ENCODE measurements at regions of chr14 and their contacts with region 1.

Region 1: GRCh38 chr14:79011091-79011919 is 841.1 kb downstream of the NRXN3 start:
- DNase-seq: no peak
- ATAC-seq: no peak; the same call in 1 of the 2 replicates
- H3K4me3 Mint-ChIP-seq: no peak overlapping the region
- H3K27ac Mint-ChIP-seq: no peak overlapping the region
- H3K4me1 Mint-ChIP-seq: no peaks in the 10 kb centered on the region
- H3K27me3 Mint-ChIP-seq: peaks cover 3% of the 10 kb centered on the region; the same call in 1 of the 2 replicates
- CTCF ChIP-seq: peak; percentile 61

Region 2: GRCh38 chr14:79028281-79028680 is 17.0 kb after region 1 on chr14:
- CTCF ChIA-PET with region 1: no interaction called
- POLR2A ChIA-PET with region 1: no interaction called
- DNase-seq: no peak
- ATAC-seq: no peak
- H3K4me3 Mint-ChIP-seq: no peak overlapping the region
- H3K27ac Mint-ChIP-seq: no peak overlapping the region
- H3K4me1 Mint-ChIP-seq: no peaks in the 10 kb centered on the region
- H3K27me3 Mint-ChIP-seq: peaks cover 3% of the 10 kb centered on the region; the same call in 1 of the 2 replicates
- CTCF ChIP-seq: no peak

Region 3: GRCh38 chr14:79483477-79484388 is 472.4 kb after region 1 on chr14:
- CTCF ChIA-PET with region 1: no interaction called
- POLR2A ChIA-PET with region 1: interaction called, 15 read pairs
- DNase-seq: peak; percentile 13
- ATAC-seq: peak; percentile 86
- H3K4me3 Mint-ChIP-seq: no peak overlapping the region
- H3K27ac Mint-ChIP-seq: peak overlapping the region; percentile 82
- H3K4me1 Mint-ChIP-seq: peaks cover 19% of the 10 kb centered on the region
- H3K27me3 Mint-ChIP-seq: no peaks in the 10 kb centered on the region
- CTCF ChIP-seq: no peak

Measured in WTC11 (cell line).